ENCODE measurements at regions of chr1 and their contacts with region 1.

Region 1: GRCh38 chr1:157490467-157491165 is 61.7 kb downstream of the FCRL5 start:
- DNase-seq: peak; percentile 13 to 76 (median 54)
- ATAC-seq: peak; percentile 90
- H3K4me3 ChIP-seq: no peak overlapping the region
- H3K27ac ChIP-seq: no peak overlapping the region
- H3K4me1 ChIP-seq: no peaks in the 10 kb centered on the region
- H3K27me3 ChIP-seq: peaks cover 0 to 5% of the 10 kb centered on the region in 2 donors
- CTCF ChIP-seq: peak; percentile 23 to 32

Region 2: DNA sequence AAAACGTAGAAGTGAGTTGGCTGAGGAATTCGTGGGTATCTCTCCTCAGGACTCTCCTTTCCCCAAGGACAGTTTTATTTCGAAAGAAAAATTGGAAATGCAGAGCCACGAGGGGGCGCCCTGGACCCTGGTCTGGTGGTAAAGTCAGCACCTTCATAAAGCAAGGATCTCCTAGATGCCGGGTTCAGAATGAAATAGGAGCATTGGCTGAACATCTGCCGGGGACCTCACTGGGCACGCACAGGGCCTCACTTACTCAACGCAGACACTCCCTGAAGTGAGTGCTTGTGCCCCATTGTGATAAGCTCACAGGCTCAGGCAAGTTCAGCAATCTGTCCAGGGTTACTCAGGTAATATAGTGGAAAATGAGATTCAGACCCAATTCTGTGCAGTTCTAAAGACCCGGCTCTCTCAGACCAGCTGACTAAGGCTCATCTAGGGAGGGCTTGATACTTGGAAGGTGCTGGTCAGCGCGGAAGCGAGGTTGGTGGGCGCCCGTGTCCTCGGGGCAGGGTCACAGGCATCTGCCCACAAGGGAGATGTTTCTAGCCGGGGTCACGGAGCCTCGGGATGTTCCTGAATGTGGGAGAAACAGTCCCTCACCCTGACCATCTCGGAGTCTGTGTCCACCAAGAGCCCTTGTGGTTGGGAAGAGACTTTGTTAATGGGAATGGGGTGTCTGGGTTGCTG is 296.8 kb before region 1 on chr1:
- intact Hi-C with region 1: loop called in 1 of 2 experiments (anchors 10 kb)
- DNase-seq: peak in 3 of 4 donors; percentile 23 to 82 (median 61)
- ATAC-seq: peak; percentile 37
- H3K4me3 ChIP-seq: no peak overlapping the region
- H3K27ac ChIP-seq: no peak overlapping the region
- H3K4me1 ChIP-seq: no peaks in the 10 kb centered on the region
- H3K27me3 ChIP-seq: peaks cover 14 to 53% of the 10 kb centered on the region in 2 donors
- CTCF ChIP-seq: peak; percentile 34 to 51

Region 3: DNA sequence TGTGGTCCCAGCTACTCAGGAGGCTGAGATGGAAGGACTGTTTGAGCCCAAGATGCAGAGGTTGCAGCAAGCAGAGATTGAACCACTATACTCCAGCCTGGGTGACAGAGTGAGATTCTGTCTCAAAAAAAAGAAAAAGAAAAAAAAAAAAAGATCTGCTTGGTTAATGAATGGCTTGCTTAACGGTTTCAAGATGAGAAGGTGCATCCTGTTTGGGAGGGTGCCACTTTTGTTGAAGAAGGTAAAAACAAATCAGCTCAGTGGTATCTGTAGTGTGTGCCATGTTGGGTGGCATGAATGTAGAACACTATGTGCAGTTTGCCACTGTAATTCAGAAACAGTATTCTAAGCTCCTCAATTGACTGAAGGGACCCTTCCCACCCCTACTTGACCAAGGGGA is 257.5 kb before region 1 on chr1:
- intact Hi-C with region 1: no loop called
- DNase-seq: no peak
- ATAC-seq: no peak
- H3K4me3 ChIP-seq: no peak overlapping the region
- H3K27ac ChIP-seq: no peak overlapping the region
- H3K4me1 ChIP-seq: no peaks in the 10 kb centered on the region
- H3K27me3 ChIP-seq: peaks cover 0 to 5% of the 10 kb centered on the region in 2 donors
- CTCF ChIP-seq: no peak

Region 4: GRCh38 chr1:157279138-157279801 is 211.3 kb before region 1 on chr1:
- intact Hi-C with region 1: no loop called
- DNase-seq: peak in 1 of 4 donors; percentile 35
- ATAC-seq: peak; percentile 55
- H3K4me3 ChIP-seq: no peak overlapping the region
- H3K27ac ChIP-seq: no peak overlapping the region
- H3K4me1 ChIP-seq: no peaks in the 10 kb centered on the region
- H3K27me3 ChIP-seq: peaks cover 0 to 76% of the 10 kb centered on the region in 2 donors
- CTCF ChIP-seq: no peak

Region 5: DNA sequence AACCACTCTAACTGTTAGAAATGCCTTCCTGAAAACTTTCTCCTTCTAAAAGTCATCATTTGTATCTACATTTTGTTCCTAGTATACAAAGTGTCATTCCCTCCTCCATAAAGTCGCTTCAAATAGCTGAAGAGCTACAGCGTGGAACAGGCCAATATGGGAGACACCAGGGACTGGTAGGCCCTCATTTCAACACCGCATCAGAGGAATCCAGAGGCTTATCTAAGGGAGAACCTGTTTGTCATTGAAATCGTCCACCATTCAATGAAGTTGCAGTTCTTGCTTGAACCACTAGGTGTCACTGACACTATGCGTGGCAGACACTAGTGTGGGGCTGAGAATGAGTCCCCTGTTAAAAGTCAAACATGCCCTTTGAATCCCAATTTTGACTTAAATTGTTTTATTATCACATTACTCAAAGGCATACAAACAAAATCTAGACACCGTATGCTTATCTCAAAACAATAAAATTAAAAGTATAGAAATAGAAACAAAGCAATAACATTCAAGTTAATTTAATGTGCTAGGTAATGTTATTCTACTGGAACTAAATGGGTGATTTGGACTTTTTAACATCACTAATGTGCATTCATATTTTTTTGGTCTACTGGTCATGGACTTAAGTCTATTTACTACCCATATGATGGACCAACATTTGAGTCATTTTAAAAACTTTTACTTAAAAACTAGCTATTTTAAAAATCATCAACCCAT is 120.7 kb before region 1 on chr1:
- intact Hi-C with region 1: loop called in 1 of 2 experiments (anchors 5 kb)
- DNase-seq: peak in 2 of 4 donors; percentile 22 to 37
- ATAC-seq: peak; percentile 96
- H3K4me3 ChIP-seq: no peak overlapping the region
- H3K27ac ChIP-seq: no peak overlapping the region
- H3K4me1 ChIP-seq: no peaks in the 10 kb centered on the region
- H3K27me3 ChIP-seq: no peaks in the 10 kb centered on the region
- CTCF ChIP-seq: peak; percentile 82 to 89

Measured in left lung (tissue), 14 donors.